ENCODE measurements at regions of chr17 and their contacts with region 1.

Region 1: GRCh38 chr17:83200202-83200699 is 120.8 kb downstream of the METRNL start:
- DNase-seq: no peak
- H3K4me3 ChIP-seq: no peak overlapping the region
- CTCF ChIP-seq: no peak

Region 2: DNA sequence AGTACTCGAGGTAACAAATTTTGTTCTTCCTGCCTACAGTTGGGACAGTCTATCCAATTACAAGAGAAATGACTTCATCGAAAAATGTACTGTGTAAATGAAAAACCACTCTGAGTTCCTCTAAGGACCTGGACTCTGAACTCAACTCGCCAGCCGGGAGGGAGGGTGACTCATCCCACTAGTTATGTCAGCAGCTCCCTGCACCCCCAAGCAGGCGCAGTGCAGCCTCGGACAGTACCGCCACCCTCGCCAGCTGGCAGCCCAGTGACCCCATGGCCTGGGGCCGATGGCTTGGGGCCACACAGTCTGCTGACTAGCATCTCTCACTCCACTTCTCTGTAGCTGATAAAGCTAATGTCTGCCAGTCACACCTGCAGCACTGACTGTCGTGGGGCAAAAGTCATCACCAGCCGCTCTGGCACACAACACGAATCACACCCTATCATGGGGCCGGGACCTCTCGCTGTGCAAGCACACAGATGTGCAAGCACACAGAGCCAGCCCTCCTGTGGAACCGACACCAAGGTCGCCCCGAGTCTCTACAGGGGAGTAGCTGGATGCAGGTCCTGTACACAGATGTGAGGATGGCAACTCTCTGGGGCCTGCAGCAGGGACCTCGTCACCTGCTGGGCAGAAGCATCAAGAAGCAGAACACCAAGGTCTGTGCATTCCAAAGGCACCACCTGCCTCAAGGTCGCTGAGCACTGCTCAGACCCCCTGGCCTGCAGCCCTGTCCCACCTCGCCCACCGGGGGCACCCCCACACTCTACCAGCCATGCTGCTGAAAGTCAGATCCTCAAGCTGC is 932.5 kb before region 1 on chr17:
- CTCF ChIA-PET with region 1: no interaction called
- POLR2A ChIA-PET with region 1: no interaction called
- DNase-seq: peak; percentile 80
- H3K4me3 ChIP-seq: peak overlapping the region; percentile 34
- CTCF ChIP-seq: no peak

Region 3: DNA sequence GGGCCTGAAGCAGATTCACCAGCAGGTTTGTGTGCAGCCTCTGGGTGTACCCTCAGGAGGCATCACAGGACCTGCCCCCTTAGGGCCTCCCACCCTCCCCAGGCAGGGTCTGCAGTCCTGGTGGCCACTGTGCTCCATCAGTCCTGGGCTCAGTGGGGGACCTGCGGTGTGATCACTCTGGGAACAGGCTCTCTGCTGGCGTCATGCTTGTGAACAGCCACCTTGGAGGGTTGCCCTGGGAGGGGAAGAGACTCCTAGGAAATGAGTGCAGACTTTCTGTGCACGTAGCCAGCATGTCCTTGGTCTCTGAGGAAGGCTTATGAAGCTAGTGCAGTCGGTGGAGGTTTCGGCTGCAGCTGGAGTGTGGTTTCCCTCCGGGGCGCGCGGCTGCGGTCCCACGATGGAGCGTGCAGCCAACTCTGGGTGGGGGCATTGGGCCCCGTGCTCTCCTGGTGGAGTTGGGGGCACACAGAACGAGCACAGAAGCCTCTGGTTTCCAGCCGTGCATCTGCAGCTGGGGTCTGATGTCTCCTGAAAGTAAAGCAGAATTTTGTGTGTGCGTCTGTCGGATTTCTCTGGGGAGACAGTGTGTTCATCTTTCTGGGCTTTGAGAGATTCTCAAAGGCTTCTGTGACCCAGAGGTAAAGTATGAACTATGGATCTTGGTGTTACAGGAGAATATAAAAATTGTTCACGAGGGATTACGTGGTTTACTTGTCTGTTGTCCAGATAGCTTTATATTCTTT is 292.3 kb before region 1 on chr17:
- CTCF ChIA-PET with region 1: no interaction called
- POLR2A ChIA-PET with region 1: no interaction called
- DNase-seq: no peak
- H3K4me3 ChIP-seq: no peak overlapping the region
- CTCF ChIP-seq: no peak

Region 4: GRCh38 chr17:83067221-83068048 is 132.8 kb before region 1 on chr17:
- CTCF ChIA-PET with region 1: no interaction called
- POLR2A ChIA-PET with region 1: no interaction called
- DNase-seq: no peak
- H3K4me3 ChIP-seq: no peak overlapping the region
- CTCF ChIP-seq: no peak

Region 5: GRCh38 chr17:83161298-83162034 is 38.8 kb before region 1 on chr17:
- CTCF ChIA-PET with region 1: no interaction called
- POLR2A ChIA-PET with region 1: no interaction called
- DNase-seq: no peak
- H3K4me3 ChIP-seq: no peak overlapping the region
- CTCF ChIP-seq: no peak

Region 6: GRCh38 chr17:83189044-83190003 is 10.9 kb before region 1 on chr17:
- CTCF ChIA-PET with region 1: interaction called, 10 read pairs
- POLR2A ChIA-PET with region 1: no interaction called
- DNase-seq: peak; percentile 55
- H3K4me3 ChIP-seq: no peak overlapping the region
- CTCF ChIP-seq: no peak

Measured in AG04449 (cell line).